ENCODE measurements at regions of chr2 and their contacts with region 1.

Region 1: DNA sequence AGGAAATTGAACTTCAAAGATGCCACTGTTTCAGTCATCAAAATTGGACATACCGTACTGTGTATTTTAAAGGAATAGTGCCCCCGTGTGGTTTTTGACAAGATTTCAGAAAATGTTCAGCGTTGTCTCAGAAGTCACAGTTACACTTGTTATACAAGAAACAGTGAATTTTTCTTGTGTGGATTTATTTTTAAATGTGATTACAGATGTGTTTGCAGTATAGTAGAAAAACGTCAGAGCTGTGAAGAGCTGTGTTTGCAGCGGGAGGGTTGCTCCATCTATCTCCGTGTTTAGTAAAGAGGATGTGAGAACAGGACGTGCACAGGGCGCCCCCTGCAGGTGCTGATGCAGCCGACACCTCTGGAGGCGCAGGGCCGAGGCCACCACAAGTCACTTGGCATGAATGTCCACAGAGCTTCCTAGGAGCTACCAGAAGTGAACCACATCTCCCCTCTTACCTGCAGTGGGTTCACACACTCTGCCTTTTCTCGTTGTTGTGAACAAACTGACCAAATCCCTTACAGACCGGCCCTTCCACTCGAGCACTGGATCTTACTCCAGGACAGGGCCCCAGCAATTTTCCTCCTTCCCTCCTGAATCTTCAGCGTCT is 73.1 kb downstream of the CACNB4 start:
- DNase-seq: peak; percentile 76
- ATAC-seq: peak; percentile 98
- H3K4me3 ChIP-seq: peak overlapping the region in 2 of 3 experiments; percentile 47 to 59; a peak in 4 of 6 replicates
- H3K27ac ChIP-seq: no peak overlapping the region
- H3K4me1 ChIP-seq: peaks cover 15% of the 10 kb centered on the region; the same call in 1 of the 2 replicates
- H3K27me3 ChIP-seq: no peaks in the 10 kb centered on the region
- CTCF ChIP-seq: peak; percentile 97
- EP300 ChIP-seq: 0 out of 4 replicates have a peak, but pooled peaks of 1 of the 2 experiments have one; percentile 23
- POLR2A ChIP-seq: no peak
- RAD21 ChIP-seq: peak; percentile 94

Region 2: GRCh38 chr2:150802635-150803034 is 1223.1 kb before region 1 on chr2:
- CTCF ChIA-PET with region 1: no interaction called
- POLR2A ChIA-PET with region 1: no interaction called
- in situ Hi-C with region 1: no loop called
- intact Hi-C with region 1: no loop called
- DNase-seq: no peak
- ATAC-seq: no peak
- H3K4me3 ChIP-seq: no peak overlapping the region
- H3K27ac ChIP-seq: no peak overlapping the region
- H3K4me1 ChIP-seq: no peaks in the 10 kb centered on the region
- H3K27me3 ChIP-seq: no peaks in the 10 kb centered on the region
- CTCF ChIP-seq: no peak
- EP300 ChIP-seq: no peak
- POLR2A ChIP-seq: no peak
- RAD21 ChIP-seq: no peak

Region 3: GRCh38 chr2:151472966-151473365 is 552.8 kb before region 1 on chr2:
- CTCF ChIA-PET with region 1: no interaction called
- POLR2A ChIA-PET with region 1: no interaction called
- in situ Hi-C with region 1: no loop called
- intact Hi-C with region 1: loop called (anchors 5 kb)
- DNase-seq: no peak
- ATAC-seq: no peak
- H3K4me3 ChIP-seq: no peak overlapping the region
- H3K27ac ChIP-seq: no peak overlapping the region
- H3K4me1 ChIP-seq: no peaks in the 10 kb centered on the region
- H3K27me3 ChIP-seq: no peaks in the 10 kb centered on the region
- CTCF ChIP-seq: no peak
- EP300 ChIP-seq: no peak
- POLR2A ChIP-seq: no peak
- RAD21 ChIP-seq: no peak

Region 4: DNA sequence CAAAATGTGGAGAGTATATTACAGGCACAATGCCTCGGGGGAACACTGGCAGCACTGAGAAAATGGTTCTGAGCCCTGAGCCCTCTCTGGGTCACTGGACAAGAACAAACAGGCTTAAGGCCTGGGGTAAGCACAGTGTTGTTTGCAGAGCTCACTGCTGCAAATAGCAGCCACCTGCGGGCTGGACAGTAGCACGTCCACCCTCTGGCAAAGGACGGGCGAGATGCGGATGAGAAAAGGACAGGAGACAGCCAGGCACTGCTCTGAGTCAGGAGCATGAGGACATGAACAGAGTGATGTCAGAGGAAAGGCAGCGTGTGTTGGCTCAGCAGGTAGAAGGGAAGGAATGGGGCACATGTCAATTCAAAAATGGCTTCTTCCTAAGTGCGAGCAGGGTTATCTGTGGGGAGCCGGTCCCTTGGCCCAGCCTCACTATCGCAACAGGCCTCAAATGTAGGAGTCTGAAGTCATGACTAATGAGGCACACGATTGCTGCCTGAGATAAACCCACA is 265.6 kb before region 1 on chr2:
- CTCF ChIA-PET with region 1: no interaction called
- POLR2A ChIA-PET with region 1: no interaction called
- in situ Hi-C with region 1: no loop called
- intact Hi-C with region 1: loop called (anchors 10 kb)
- DNase-seq: peak; percentile 79
- ATAC-seq: peak; percentile 99
- H3K4me3 ChIP-seq: peak overlapping the region in 1 of 3 experiments; percentile 44; a peak in 2 of 6 replicates
- H3K27ac ChIP-seq: peak overlapping the region; percentile 30
- H3K4me1 ChIP-seq: peaks cover 62% of the 10 kb centered on the region
- H3K27me3 ChIP-seq: no peaks in the 10 kb centered on the region
- CTCF ChIP-seq: peak; percentile 55
- EP300 ChIP-seq: peak in 1 of 2 experiments; percentile 50; a peak in 1 of 4 replicates
- POLR2A ChIP-seq: 0 out of 4 replicates have a peak, but pooled peaks of 1 of the 2 experiments have one; percentile 23
- RAD21 ChIP-seq: peak; percentile 43; the same call in 1 of the 2 replicates

Region 5: DNA sequence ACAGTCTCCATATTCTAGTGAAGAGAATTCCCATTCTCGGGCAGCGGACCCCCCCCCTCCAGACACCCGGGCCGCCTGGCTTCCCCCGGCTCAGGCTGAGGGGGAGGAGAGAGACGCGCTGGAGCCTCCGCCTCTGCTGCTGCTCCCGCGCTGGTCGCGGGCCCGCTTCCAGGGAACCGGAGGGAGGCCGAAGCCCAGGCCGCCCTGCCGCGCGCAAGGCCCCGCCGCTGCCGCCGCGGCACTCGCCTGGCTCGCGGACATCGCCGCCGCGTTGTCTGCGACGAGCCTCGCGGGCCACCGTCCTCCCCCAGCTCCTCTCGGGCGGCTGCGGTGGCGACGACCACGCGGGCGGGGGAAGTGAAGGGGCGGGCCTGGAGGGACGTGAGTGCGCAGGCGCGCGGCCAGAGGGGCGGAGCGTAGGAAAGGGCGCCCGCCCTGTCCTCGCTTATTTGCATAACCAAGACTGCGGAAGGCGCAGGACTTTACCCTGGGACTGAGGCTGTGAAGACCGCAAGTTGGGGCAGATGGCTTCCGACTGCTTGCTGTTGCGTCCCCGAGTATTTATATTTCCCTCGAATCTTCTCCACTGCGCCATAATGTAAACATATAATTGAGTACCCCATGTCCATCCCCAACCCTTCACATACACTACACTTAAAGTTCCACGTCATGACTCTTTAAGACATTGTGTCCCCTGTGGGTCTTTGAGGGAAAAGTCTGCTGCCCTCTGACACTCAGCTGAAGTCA is 197.5 kb before region 1 on chr2 and contains the start of gene ARL5A:
- CTCF ChIA-PET with region 1: interaction called, 7 read pairs
- POLR2A ChIA-PET with region 1: no interaction called
- in situ Hi-C with region 1: no loop called
- intact Hi-C with region 1: loop called (anchors 5 kb)
- DNase-seq: peak; percentile 95
- ATAC-seq: peak; percentile 95
- H3K4me3 ChIP-seq: peak within 1 kb of the TSS; percentile 94 to 98 (median 95)
- H3K27ac ChIP-seq: peak within 1 kb of the TSS; percentile 77
- H3K4me1 ChIP-seq: peaks cover 66% of the 10 kb centered on the region
- H3K27me3 ChIP-seq: no peaks in the 10 kb centered on the region; a peak in 1 of 5 replicates
- CTCF ChIP-seq: no peak; the same call in none of the 2 replicates
- EP300 ChIP-seq: 0 out of 4 replicates have a peak, but pooled peaks of 1 of the 2 experiments have one; percentile 11
- POLR2A ChIP-seq: peak; percentile 99
- RAD21 ChIP-seq: peak; percentile 76
- total RNA-seq, gene ARL5A: 149 and 170 TPM in 2 replicates

Region 6: GRCh38 chr2:152047819-152048471 is 22.2 kb after region 1 on chr2:
- CTCF ChIA-PET with region 1: no interaction called
- POLR2A ChIA-PET with region 1: no interaction called
- in situ Hi-C with region 1: no loop called
- intact Hi-C with region 1: no loop called
- DNase-seq: peak; percentile 21
- ATAC-seq: peak; percentile 76
- H3K4me3 ChIP-seq: no peak overlapping the region
- H3K27ac ChIP-seq: no peak overlapping the region
- H3K4me1 ChIP-seq: no peaks in the 10 kb centered on the region
- H3K27me3 ChIP-seq: peaks cover 0 to 21% of the 10 kb centered on the region in 2 experiments; a peak in 2 of 5 replicates
- CTCF ChIP-seq: peak; percentile 35
- EP300 ChIP-seq: no peak
- POLR2A ChIP-seq: no peak
- RAD21 ChIP-seq: no peak

Region 7: GRCh38 chr2:152255921-152256320 is 230.1 kb after region 1 on chr2:
- CTCF ChIA-PET with region 1: no interaction called
- POLR2A ChIA-PET with region 1: no interaction called
- in situ Hi-C with region 1: no loop called
- intact Hi-C with region 1: no loop called
- DNase-seq: no peak
- ATAC-seq: no peak
- H3K4me3 ChIP-seq: no peak overlapping the region
- H3K27ac ChIP-seq: no peak overlapping the region
- H3K4me1 ChIP-seq: no peaks in the 10 kb centered on the region
- H3K27me3 ChIP-seq: peaks cover 0 to 17% of the 10 kb centered on the region in 2 experiments; a peak in 2 of 5 replicates
- CTCF ChIP-seq: no peak
- EP300 ChIP-seq: no peak
- POLR2A ChIP-seq: no peak
- RAD21 ChIP-seq: no peak

Region 8: DNA sequence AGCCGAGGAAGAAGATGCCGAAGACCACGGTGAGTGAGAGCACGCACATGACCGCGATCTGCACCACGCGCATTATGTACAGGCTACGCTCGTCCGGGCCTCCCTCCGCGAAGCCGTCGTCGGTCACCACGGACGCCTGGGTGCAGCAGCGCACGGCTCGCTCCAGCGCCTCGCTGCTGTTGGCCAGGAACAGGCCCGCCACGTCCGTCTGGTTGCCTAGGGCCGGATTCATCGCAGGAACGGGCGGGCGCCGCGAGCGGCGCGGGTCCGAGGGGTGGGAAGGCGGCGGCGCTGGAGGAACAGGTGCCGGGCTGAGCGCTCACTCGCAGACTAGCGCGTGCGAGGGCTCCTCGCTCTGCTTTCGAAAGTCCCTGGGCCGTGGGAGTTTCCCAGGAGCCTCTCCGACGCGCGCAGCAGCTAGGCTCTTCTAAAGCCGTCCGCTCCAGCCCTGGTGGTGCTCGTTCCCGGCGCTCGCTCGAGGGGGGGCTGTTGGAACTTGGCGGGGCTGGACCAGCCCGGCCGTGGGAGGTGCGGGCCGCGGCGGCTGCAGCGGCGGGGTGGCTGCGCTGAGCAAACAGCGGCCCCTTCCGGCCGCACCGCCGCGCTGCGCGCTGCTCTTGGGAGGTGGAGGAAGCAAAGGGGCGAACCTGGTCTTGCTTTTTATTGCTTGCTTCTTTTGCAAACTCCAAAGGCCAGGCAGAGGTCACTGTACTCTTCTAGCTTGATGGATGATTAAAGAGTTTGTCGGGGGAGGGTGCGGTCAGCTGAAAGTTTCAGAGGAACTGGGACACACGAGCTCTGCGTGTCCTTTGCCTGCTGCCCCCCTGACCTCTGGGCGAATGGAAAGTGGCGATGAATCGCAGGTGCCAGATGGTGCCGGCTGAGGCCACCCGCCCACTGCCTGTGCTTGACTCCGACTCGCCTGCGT is 1452.8 kb after region 1 on chr2 and contains the start of gene RPRM:
- CTCF ChIA-PET with region 1: no interaction called
- POLR2A ChIA-PET with region 1: no interaction called
- in situ Hi-C with region 1: loop called (anchors 25 kb)
- intact Hi-C with region 1: no loop called
- DNase-seq: peak; percentile 35
- ATAC-seq: peak; percentile 98
- H3K4me3 ChIP-seq: peak within 1 kb of the TSS; percentile 19 to 63 (median 39); a peak in 4 of 6 replicates
- H3K27ac ChIP-seq: no peak within 1 kb of the TSS
- H3K4me1 ChIP-seq: peaks cover 16% of the 10 kb centered on the region
- H3K27me3 ChIP-seq: peaks cover 6 to 43% of the 10 kb centered on the region in 2 experiments; a peak in 4 of 5 replicates
- CTCF ChIP-seq: peak; percentile 85
- EP300 ChIP-seq: no peak
- POLR2A ChIP-seq: no peak
- RAD21 ChIP-seq: peak; percentile 94
- total RNA-seq, gene RPRM: not detected in 2 replicates

Measured in HepG2 (cell line).